GM13976 (cell line): ENCODE measurements at regions of chr5 and their contacts with region 1.

Region 1: DNA sequence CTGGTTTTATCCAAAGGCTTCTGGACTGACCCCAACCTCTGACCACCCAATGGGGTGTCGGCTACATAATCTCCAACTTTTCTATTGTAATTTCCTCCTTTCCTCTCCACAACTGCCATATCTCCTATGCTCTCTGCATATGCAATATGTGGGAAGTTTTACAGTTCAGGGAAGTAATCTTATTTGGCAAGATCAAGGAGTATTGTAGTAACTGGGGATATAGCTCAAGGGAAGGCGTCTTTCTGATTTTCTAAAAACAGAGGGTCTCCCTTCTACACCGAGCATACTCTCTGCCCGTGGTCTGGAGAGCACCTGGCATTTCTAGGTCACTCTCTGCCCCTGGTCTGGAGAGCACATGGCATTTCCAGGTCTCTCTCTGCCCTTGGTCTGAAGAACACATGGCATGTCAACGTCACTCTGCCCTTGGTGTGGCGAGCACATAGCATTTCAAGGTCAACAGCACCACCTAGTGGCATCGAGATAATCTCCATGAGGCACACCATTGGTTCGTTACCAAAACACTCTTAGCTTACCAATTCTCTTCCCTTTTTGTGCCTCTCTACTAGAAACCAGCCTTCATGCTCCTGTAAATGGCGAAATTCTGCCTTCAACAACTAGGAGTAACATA is 616.4 kb upstream of the NUDT12 start:
- DNase-seq: peak; percentile 20
- CTCF ChIP-seq: peak; percentile 41

Region 2: GRCh38 chr5:103808464-103809106 is 370.4 kb before region 1 on chr5:
- in situ Hi-C with region 1: loop called (anchors 25 kb)
- DNase-seq: peak; percentile 45
- CTCF ChIP-seq: peak; percentile 68